IMR-90 (cell line): ENCODE measurements at regions of chr5 and their contacts with region 1.

Region 1: GRCh38 chr5:114449860-114450421 is 88.1 kb downstream of the KCNN2 start:
- DNase-seq: peak; percentile 72
- ATAC-seq: peak; percentile 98
- H3K4me3 ChIP-seq: no peak overlapping the region
- H3K27ac ChIP-seq: no peak overlapping the region
- H3K4me1 ChIP-seq: no peaks in the 10 kb centered on the region
- H3K27me3 ChIP-seq: peaks cover 2% of the 10 kb centered on the region
- CTCF ChIP-seq: peak; percentile 84
- POLR2A ChIP-seq: no peak
- RAD21 ChIP-seq: peak; percentile 93

Region 2: DNA sequence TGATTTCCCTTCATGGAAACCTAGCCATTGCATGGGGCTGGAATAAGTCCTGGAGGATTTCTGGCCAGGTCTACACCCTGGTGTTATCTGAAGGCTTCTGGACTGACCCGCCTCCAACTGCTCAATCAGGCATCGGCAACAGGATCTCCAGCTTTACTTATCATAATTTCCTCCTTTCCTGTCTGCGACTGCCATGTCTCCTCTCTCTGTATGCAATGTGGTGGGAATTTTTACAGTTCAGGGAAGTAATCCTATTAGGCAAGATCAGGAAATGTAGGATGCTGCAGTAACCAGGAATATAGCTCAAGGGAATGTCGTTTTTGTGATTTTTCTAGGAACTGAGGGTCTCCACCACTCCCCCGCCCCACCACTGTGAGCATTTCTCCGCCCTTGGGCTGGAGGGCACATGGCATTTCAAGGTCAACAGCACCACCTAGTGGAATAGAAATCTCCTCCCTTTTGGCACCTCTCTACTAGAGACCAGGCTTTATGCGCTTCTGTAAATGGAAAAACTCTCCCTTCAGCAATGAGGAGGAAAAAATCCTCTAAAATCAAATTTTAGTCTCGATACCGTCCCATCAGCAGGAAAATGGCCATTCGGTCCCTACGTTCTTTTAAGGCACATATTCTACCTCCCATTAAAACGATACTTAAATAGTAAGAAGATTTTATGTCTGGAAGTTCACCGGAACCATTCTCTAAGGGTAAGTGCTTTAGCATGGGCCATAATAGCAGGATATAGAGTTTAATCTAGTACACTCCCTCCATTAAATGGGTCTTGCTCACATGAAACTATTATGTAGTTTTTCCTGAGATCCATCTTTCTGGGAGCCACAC is 843.4 kb before region 1 on chr5:
- CTCF ChIA-PET with region 1: no interaction called
- POLR2A ChIA-PET with region 1: no interaction called
- dilution Hi-C with region 1: no loop called
- in situ Hi-C with region 1: loop called (anchors 5 kb)
- intact Hi-C with region 1: no loop called
- DNase-seq: peak; percentile 56
- ATAC-seq: peak; percentile 90
- H3K4me3 ChIP-seq: no peak overlapping the region
- H3K27ac ChIP-seq: no peak overlapping the region
- H3K4me1 ChIP-seq: peaks cover 6% of the 10 kb centered on the region; the same call in 1 of the 2 replicates
- H3K27me3 ChIP-seq: no peaks in the 10 kb centered on the region; the same call in 1 of the 2 replicates
- CTCF ChIP-seq: peak; percentile 80
- POLR2A ChIP-seq: no peak
- RAD21 ChIP-seq: peak; percentile 91

Region 3: DNA sequence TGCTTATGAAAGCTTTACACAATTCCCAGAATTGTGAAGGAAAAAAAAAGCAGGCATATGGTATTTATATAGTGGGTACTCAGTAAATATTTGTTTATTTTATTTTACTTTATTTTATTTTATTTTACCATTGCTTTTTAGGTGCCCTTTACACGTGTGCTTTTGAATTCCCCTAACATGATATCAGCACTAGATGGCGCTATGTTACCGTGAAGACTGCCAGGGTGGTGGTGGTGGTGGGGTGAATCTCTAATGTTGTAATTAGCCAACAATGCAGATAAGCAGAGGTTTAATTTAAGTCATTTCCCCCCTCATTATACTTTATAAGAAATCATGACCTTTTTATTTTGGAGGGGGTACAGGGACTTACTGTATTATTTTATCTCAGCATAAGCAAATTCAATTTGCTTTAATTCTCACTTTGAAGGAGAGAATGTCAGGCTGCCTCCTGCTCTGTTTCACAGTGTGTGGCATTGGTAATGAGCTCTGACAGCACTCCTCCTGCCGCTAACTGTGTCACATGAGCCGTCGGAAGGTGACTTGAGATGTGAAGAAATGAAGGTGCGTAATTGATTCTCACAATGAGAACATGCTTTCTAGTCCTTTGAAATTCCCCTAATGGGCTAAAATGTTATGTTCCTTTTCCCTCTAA is 770.9 kb before region 1 on chr5:
- CTCF ChIA-PET with region 1: no interaction called
- POLR2A ChIA-PET with region 1: no interaction called
- dilution Hi-C with region 1: no loop called
- in situ Hi-C with region 1: loop called (anchors 10 kb)
- intact Hi-C with region 1: loop called (anchors 1 kb)
- DNase-seq: peak; percentile 36
- ATAC-seq: peak; percentile 84
- H3K4me3 ChIP-seq: no peak overlapping the region
- H3K27ac ChIP-seq: no peak overlapping the region
- H3K4me1 ChIP-seq: no peaks in the 10 kb centered on the region
- H3K27me3 ChIP-seq: no peaks in the 10 kb centered on the region; the same call in 1 of the 2 replicates
- CTCF ChIP-seq: peak; percentile 84
- POLR2A ChIP-seq: no peak
- RAD21 ChIP-seq: peak; percentile 85

Region 4: GRCh38 chr5:114018186-114018585 is 431.8 kb before region 1 on chr5:
- CTCF ChIA-PET with region 1: no interaction called
- POLR2A ChIA-PET with region 1: no interaction called
- dilution Hi-C with region 1: no loop called
- in situ Hi-C with region 1: no loop called
- intact Hi-C with region 1: loop called (anchors 1 kb)
- DNase-seq: peak; percentile 1
- ATAC-seq: peak; percentile 35; the same call in 1 of the 2 replicates
- H3K4me3 ChIP-seq: no peak overlapping the region
- H3K27ac ChIP-seq: no peak overlapping the region
- H3K4me1 ChIP-seq: no peaks in the 10 kb centered on the region
- H3K27me3 ChIP-seq: no peaks in the 10 kb centered on the region; the same call in 1 of the 2 replicates
- CTCF ChIP-seq: peak; percentile 22; the same call in 1 of the 2 replicates
- POLR2A ChIP-seq: no peak
- RAD21 ChIP-seq: peak; percentile 44

Region 5: DNA sequence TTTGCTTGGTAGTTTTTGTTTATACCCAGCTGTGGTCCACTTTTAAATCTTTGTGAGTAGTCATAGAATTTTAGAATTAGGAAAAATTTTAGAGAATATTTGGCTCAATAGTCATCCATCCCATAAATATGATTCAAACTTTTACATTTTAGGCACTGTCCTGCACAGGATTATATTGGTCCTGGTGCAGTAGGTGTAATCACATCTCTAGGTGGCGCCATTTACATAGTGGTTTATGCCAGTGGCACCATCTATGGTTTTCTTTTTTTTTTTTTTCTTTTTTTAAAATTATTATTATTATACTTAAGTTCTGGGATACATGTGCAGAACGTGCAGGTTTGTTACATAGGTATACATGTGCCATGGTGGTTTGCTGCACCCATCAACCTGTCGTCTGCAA is 348.8 kb before region 1 on chr5:
- CTCF ChIA-PET with region 1: interaction called, 11 read pairs
- POLR2A ChIA-PET with region 1: no interaction called
- dilution Hi-C with region 1: no loop called
- in situ Hi-C with region 1: loop called (anchors 5 kb)
- intact Hi-C with region 1: loop called (anchors 1 kb)
- DNase-seq: peak; percentile 80
- ATAC-seq: peak; percentile 91
- H3K4me3 ChIP-seq: no peak overlapping the region
- H3K27ac ChIP-seq: no peak overlapping the region
- H3K4me1 ChIP-seq: no peaks in the 10 kb centered on the region
- H3K27me3 ChIP-seq: no peaks in the 10 kb centered on the region
- CTCF ChIP-seq: peak; percentile 82
- POLR2A ChIP-seq: no peak
- RAD21 ChIP-seq: peak; percentile 85

Region 6: DNA sequence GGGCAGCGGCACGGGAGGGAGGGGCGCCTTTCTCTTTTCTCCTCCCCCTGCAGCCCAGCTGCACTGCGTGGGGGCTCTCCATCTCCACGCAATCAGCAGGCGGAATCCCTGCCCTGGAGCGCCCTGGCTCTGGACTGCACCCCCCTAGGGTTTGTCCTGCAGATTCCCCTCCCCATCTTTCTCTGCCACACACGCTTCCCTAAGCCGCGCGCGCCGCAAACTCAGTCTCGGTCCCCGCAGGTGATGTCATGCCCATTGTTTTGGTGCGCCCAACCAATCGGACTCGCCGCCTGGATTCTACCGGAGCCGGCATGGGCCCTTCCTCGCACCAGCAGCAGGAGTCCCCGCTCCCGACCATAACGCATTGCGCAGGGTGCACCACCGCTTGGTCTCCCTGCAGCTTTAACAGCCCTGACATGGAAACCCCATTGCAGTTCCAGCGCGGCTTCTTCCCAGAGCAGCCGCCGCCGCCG is 88.2 kb before region 1 on chr5 and contains the start of gene KCNN2:
- CTCF ChIA-PET with region 1: interaction called, 15 read pairs
- POLR2A ChIA-PET with region 1: no interaction called
- dilution Hi-C with region 1: no loop called
- in situ Hi-C with region 1: loop called (anchors 5 kb)
- intact Hi-C with region 1: loop called (anchors 1 kb)
- DNase-seq: peak; percentile 92
- ATAC-seq: peak; percentile 87
- H3K4me3 ChIP-seq: peak within 1 kb of the TSS; percentile 76
- H3K27ac ChIP-seq: no peak within 1 kb of the TSS
- H3K4me1 ChIP-seq: no peaks in the 10 kb centered on the region
- H3K27me3 ChIP-seq: peaks cover 7% of the 10 kb centered on the region
- CTCF ChIP-seq: no peak
- POLR2A ChIP-seq: 0 out of 2 replicates have a peak, but pooled peaks have one; percentile 22
- RAD21 ChIP-seq: no peak
- total RNA-seq, gene KCNN2: 2.2 and 3.3 TPM in 2 replicates

Region 7: GRCh38 chr5:114957384-114957783 is 507.4 kb after region 1 on chr5:
- CTCF ChIA-PET with region 1: no interaction called
- POLR2A ChIA-PET with region 1: no interaction called
- dilution Hi-C with region 1: no loop called
- in situ Hi-C with region 1: no loop called
- intact Hi-C with region 1: no loop called
- DNase-seq: no peak
- ATAC-seq: no peak
- H3K4me3 ChIP-seq: no peak overlapping the region
- H3K27ac ChIP-seq: no peak overlapping the region
- H3K4me1 ChIP-seq: no peaks in the 10 kb centered on the region
- H3K27me3 ChIP-seq: no peaks in the 10 kb centered on the region
- CTCF ChIP-seq: no peak
- POLR2A ChIP-seq: no peak
- RAD21 ChIP-seq: no peak

Region 8: GRCh38 chr5:115246361-115246991 is 796.5 kb after region 1 on chr5:
- CTCF ChIA-PET with region 1: no interaction called
- POLR2A ChIA-PET with region 1: no interaction called
- dilution Hi-C with region 1: no loop called
- in situ Hi-C with region 1: no loop called
- intact Hi-C with region 1: loop called (anchors 5 kb)
- DNase-seq: peak; percentile 48
- ATAC-seq: peak; percentile 83
- H3K4me3 ChIP-seq: no peak overlapping the region
- H3K27ac ChIP-seq: no peak overlapping the region
- H3K4me1 ChIP-seq: peaks cover 6% of the 10 kb centered on the region
- H3K27me3 ChIP-seq: no peaks in the 10 kb centered on the region
- CTCF ChIP-seq: peak; percentile 83
- POLR2A ChIP-seq: no peak
- RAD21 ChIP-seq: peak; percentile 77